PC-9 (cell line): ENCODE measurements at regions of chr2 and their contacts with region 1.

Region 1: DNA sequence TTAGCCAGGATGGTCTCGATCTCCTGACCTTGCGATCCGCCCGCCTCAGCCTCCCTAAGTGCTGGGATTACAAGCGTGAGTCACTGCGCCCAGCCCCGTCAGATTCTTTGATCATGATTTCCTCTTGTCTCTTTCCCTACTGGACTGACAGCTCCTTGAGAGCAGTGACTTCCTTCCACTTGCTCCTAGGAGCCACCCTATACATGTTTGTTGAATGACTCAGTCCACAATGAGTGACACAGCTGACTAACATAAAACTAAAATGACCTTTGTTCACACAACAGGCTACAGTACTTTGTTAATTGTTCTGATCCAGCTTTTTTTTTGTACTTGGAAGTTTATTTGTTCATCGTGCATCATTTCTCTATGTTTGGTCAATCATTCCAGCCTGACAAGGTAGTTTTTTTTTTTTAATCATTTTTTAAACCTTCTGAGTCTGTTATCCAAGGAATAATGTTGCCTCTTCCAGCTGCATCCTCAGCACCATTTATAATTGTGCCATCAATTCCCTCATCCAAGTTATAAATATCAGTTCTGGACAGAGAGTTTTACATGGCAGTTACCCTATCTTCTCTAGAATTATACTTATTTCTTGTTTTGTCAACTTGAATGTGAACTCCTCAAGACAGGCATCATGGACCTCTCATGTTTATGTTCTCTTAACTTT is 42.9 kb upstream of the TUBA3E start:
- DNase-seq: peak; percentile 74 to 97
- H3K4me3 ChIP-seq: no peak overlapping the region
- H3K27ac ChIP-seq: peak overlapping the region; percentile 48
- H3K4me1 ChIP-seq: peaks cover 10% of the 10 kb centered on the region; the same call in 1 of the 2 replicates
- H3K27me3 ChIP-seq: no peaks in the 10 kb centered on the region
- CTCF ChIP-seq: no peak

Region 2: GRCh38 chr2:130181325-130181879 is 59.8 kb before region 1 on chr2 and contains the start of gene SMPD4:
- CTCF ChIA-PET with region 1: no interaction called
- POLR2A ChIA-PET with region 1: no interaction called
- intact Hi-C with region 1: loop called (anchors 5 kb)
- DNase-seq: peak; percentile 87 to 97
- H3K4me3 ChIP-seq: peak within 1 kb of the TSS; percentile 79
- H3K27ac ChIP-seq: peak within 1 kb of the TSS; percentile 32; the same call in 1 of the 2 replicates
- H3K4me1 ChIP-seq: 0 out of 2 replicates have a peak, but pooled peaks cover 4% of the 10 kb centered on the region
- H3K27me3 ChIP-seq: no peaks in the 10 kb centered on the region
- CTCF ChIP-seq: no peak
- total RNA-seq, gene SMPD4: 77.9 and 84.1 TPM in 2 replicates